Calu3 (cell line): ENCODE measurements at regions of chr1 and their contacts with region 1.

Region 1: GRCh38 chr1:18668796-18669404 is 38.3 kb downstream of the PAX7 start:
- DNase-seq: peak; percentile 68
- H3K4me3 Mint-ChIP-seq: no peak overlapping the region
- H3K27ac Mint-ChIP-seq: no peak overlapping the region
- H3K4me1 Mint-ChIP-seq: peaks cover 44% of the 10 kb centered on the region
- H3K27me3 Mint-ChIP-seq: peaks cover 3% of the 10 kb centered on the region
- CTCF ChIP-seq: no peak

Region 2: DNA sequence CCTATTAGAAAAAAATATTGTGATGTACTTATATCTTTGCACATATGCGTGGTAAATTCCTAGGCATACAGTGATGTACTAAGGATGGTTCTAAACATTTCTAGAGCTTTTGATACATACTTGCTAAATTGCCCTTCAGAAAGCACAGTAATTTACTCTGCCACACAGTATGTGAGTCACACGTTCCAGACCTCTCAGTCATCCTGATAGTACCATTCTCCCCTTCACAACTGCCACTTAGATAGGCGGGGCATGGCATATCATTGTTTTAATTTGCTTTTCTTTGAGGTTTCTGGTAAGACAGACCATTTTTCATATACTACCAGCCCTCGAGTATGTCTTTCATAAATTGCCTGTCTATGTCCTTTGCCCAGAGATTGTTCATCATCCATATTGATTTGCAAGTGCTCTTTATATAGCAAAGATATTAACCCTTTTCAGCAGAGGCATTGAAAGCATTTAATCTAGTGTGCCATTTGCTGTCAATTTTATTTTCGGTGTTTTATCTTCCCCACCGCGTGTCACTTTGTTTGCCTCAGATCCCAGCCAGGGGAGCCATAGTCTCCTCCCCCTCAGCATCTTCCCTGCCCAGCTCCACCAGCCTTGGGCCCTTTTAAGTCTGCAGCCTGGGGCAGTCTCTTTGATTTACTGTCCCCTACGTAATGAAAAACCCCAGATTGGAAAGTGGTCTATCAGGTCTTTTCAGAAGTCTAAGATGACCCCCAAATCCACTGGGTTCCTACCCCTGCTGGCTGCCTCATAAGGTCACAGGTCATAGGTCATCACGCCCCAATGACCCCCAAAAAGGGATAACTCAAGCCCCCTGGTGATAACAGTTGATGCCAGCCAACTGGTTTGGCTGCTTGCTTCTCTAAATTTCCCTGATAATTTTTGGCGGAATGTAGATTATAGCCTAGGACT is 50.1 kb before region 1 on chr1:
- CTCF ChIA-PET with region 1: interaction called, 5 read pairs
- intact Hi-C with region 1: loop called (anchors 5 kb)
- DNase-seq: peak; percentile 44
- H3K4me3 Mint-ChIP-seq: no peak overlapping the region
- H3K27ac Mint-ChIP-seq: peak overlapping the region; percentile 46
- H3K4me1 Mint-ChIP-seq: peaks cover 16% of the 10 kb centered on the region
- H3K27me3 Mint-ChIP-seq: peaks cover 7% of the 10 kb centered on the region
- CTCF ChIP-seq: no peak

Region 3: DNA sequence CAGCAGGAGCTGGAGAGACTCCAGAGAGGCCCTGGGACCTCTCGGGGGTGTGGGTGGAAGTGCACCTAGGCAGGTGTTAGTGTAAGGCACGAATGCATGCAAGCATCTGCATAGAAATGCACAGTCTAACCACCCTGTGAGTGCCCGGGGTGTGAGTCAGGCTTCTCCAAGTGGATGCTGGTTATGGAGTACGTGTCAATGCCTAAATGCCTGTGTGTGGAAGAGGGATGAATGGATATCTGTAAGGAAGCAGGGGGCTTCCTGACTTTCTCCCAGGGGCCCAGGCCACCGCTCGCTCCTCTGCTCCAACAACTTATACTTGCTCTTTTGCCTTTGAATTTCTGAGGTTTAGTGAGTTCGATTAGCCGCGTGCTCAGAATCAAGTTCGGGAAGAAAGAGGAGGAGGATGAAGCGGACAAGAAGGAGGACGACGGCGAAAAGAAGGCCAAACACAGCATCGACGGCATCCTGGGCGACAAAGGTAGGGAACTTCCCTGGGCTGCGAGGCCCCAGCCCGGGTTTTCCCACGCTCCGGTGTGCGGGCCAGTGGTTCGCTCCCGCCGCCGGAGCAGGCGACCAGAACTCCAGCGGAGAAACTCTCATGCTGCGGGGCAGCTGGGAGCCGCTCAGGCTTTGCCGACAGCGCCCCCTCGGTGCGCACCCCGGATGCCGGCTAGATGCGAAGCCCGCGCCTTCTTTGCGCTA is 32.9 kb before region 1 on chr1:
- CTCF ChIA-PET with region 1: no interaction called
- intact Hi-C with region 1: no loop called
- DNase-seq: no peak
- H3K4me3 Mint-ChIP-seq: peak overlapping the region; percentile 2
- H3K27ac Mint-ChIP-seq: no peak overlapping the region
- H3K4me1 Mint-ChIP-seq: peaks cover 30% of the 10 kb centered on the region
- H3K27me3 Mint-ChIP-seq: peaks cover 100% of the 10 kb centered on the region
- CTCF ChIP-seq: no peak